ENCODE measurements at regions of chr16 and their contacts with region 1.

Region 1: DNA sequence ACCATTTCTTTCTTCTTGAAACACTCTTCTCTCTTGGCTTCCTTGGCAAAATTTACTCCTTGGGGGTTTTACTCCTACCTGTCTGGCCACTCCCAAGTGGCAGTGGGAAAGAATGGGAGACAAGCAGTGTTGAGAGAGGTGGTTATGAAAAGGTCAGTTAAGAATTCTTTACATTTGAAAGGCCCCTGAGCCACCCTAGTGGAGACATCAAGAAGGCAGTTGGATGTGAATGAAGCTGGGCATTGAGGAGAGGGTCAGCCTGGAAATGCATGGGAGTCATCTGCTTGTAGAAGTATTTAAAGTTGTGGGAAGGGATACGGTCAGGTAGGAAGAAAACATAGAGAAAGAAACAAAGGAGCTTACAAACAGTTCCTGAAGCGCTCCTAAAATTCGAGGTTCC is 42.3 kb upstream of the CCNF start:
- DNase-seq: no peak
- H3K4me3 ChIP-seq: no peak overlapping the region
- H3K27ac ChIP-seq: no peak overlapping the region
- H3K4me1 ChIP-seq: no peaks in the 10 kb centered on the region
- H3K27me3 ChIP-seq: peaks cover 18% of the 10 kb centered on the region
- CTCF ChIP-seq: peak in 1 of 5 experiments; percentile 10
- EP300 ChIP-seq: no peak
- POLR2A ChIP-seq: no peak

Region 2: DNA sequence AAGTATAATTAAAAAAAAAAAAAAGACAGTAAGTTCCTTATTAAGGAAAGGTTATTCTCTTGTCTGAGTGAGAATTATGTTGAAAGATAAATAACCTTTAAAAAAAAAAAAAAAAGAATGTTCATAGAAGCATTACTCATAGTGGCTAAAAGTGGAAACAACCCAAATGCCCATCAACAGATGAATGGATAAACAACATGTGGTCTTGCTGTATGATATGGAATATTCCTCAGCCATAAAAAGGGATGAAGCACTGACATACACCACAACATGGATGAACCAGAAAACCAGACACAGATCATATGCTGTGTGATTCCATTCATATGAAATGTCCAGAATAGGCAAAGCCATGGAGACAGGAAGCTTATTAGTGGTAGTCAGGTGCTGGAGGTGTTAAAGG is 33.0 kb after region 1 on chr16:
- in situ Hi-C with region 1: no loop called
- intact Hi-C with region 1: loop called (anchors 1 kb)
- DNase-seq: no peak
- H3K4me3 ChIP-seq: no peak overlapping the region
- H3K27ac ChIP-seq: no peak overlapping the region
- H3K4me1 ChIP-seq: no peaks in the 10 kb centered on the region
- H3K27me3 ChIP-seq: peaks cover 6% of the 10 kb centered on the region
- CTCF ChIP-seq: no peak
- EP300 ChIP-seq: no peak
- POLR2A ChIP-seq: no peak

Region 3: GRCh38 chr16:2948807-2949738 is 562.1 kb after region 1 on chr16:
- in situ Hi-C with region 1: no loop called
- intact Hi-C with region 1: no loop called
- DNase-seq: no peak
- H3K4me3 ChIP-seq: no peak overlapping the region
- H3K27ac ChIP-seq: no peak overlapping the region
- H3K4me1 ChIP-seq: no peaks in the 10 kb centered on the region
- H3K27me3 ChIP-seq: peaks cover 3% of the 10 kb centered on the region
- CTCF ChIP-seq: no peak
- EP300 ChIP-seq: no peak
- POLR2A ChIP-seq: no peak

Measured in transverse colon (tissue), 4 donors.